Activated T-helper 2 cell treated with anti-CD3 and anti-CD28 coated beads, Interferon-gamma antibody, Interleukin-2, Interleukin-4, amounts not matched to agents 10 μg/mL and 5 μg/mL and 100 μg/mL, durations not matched to agents 14 hours and 24 hours and 36 hours (primary cell): ENCODE measurements at regions of chr10 and their contacts with region 1.

Region 1: DNA sequence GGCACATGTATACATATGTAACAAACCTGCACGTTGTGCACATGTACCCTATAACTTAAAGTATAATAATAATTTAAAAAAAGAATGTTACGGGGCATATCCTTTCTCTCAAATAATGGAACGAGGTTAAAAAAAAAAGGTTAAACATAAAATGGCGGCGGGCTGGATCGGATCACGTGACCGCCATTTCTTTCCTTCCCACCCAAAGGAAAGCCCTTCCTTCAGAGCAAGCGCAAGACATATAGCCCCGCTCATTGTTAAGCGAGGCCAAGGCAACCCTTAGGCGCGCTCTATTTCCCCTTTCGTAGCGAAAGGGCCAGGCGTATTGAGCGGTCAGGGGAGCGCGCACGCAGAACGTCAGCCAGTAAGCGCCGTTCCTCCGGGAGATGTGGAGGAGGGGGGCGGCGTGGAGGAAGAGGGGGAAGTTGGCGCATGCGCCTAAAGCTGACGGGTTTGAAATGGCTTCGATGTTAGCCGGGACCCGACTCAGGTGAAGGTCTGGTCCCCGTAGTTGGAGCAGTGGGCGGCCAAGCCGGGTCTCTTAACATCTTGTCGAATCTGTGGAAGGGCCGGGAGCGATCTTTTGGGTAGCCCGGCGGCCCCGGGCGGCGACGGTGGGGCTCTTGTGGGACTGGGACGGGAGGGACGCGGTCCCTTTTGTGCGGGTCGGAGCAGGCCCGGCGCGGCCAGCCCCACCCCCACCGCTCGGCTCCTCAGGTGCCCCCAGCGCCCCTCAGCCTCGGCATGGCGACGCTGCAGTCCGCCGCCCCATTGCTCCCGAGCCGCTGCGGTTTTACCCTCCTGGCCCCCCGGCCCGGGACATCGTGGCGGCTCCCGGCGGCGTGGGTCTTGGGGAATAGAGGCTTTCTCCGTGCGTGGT is at the start of gene CCAR1:
- DNase-seq: peak; percentile 95
- H3K4me3 Mint-ChIP-seq: peak within 1 kb of the TSS; percentile 80
- H3K27ac Mint-ChIP-seq: peak within 1 kb of the TSS; percentile 89
- H3K4me1 Mint-ChIP-seq: peaks cover 10% of the 10 kb centered on the region
- H3K27me3 Mint-ChIP-seq: no peaks in the 10 kb centered on the region
- total RNA-seq, gene CCAR1: 94.6 and 108 TPM in 2 replicates

Region 2: DNA sequence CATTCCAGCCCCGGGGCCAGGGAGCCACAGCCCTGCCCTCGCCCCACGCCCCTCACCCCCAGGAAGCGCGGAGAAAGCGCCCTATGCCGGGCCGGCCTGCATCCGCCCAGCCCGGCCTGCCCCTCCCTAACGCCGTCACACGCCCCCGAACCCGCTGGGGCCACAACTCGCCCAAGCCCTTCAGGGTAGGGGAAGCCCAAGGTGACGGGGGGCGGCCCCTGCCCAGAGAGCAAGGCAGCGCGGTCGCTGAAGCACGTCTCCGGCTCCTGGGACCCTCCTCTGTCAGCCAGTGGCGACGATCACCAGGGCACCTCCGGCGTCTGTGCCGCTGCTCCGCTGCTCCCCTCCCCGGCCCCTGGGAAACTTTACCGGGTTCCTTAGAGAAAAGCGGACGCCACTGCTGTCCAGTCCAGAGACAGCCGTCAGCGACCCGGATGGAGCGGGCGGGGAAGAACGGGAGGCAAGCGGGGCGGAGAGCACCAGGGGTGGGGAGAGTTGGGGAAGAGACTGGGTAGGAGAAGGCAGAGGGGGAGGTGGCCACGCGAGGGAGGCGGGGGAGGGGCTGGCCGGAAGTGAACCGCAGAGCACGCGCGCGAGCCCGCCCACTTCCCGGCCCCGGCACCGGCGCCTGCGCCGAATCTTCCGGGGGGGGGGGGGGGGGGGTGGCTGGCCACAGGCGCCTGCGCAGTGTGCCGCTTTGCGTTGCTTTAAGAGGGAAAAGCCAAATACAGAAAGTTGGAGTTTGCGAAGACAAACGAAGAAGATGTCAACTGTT is 646.1 kb before region 1 on chr10 and contains the start of gene HERC4:
- intact Hi-C with region 1: loop called (anchors 2 kb)
- DNase-seq: peak; percentile 83
- H3K4me3 Mint-ChIP-seq: peak within 1 kb of the TSS; percentile 96
- H3K27ac Mint-ChIP-seq: peak within 1 kb of the TSS; percentile 92
- H3K4me1 Mint-ChIP-seq: peaks cover 42% of the 10 kb centered on the region
- H3K27me3 Mint-ChIP-seq: no peaks in the 10 kb centered on the region
- total RNA-seq, gene HERC4: 48.9 and 55.7 TPM in 2 replicates

Region 3: GRCh38 chr10:68406815-68407548 is 314.1 kb before region 1 on chr10 and contains the start of gene RUFY2:
- intact Hi-C with region 1: loop called (anchors 5 kb)
- DNase-seq: peak; percentile 75
- H3K4me3 Mint-ChIP-seq: peak within 1 kb of the TSS; percentile 87
- H3K27ac Mint-ChIP-seq: peak within 1 kb of the TSS; percentile 80
- H3K4me1 Mint-ChIP-seq: peaks cover 14% of the 10 kb centered on the region
- H3K27me3 Mint-ChIP-seq: no peaks in the 10 kb centered on the region
- total RNA-seq, gene RUFY2: 11.3 and 12.1 TPM in 2 replicates

Region 4: DNA sequence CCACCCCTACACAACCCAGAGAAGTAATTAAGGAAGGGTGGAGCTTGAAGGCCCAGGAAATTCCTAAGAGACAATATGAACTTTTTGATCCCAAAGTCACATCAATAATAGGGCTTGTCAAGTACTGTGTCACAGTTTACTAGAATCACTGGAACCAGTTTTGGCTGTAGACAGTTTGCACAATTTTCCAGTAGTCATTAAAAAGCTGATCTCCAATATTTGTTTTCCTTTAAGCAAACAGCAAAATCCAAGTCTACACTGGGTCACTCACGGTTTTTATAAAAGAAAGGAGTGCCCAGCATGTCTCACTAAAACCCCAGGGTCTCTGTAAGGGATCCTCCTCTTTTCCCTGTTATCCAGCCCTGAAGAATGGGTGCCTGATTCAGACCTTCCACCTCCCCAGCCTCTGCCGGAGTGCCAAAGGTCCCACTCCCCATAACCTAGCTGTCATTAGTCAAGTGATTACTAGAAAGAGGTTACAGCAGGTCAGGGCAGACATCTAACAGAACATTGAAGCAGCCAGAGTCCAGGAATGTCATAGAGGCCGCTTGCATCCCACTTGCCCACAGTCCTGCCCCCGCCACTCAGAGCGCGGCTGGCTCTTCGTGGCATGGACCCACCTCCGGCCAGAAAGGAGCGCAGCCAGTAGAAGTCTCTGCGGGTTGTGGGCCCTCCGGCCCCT is 194.3 kb before region 1 on chr10:
- intact Hi-C with region 1: loop called (anchors 1 kb)
- DNase-seq: no peak
- H3K4me3 Mint-ChIP-seq: peak overlapping the region; percentile 92
- H3K27ac Mint-ChIP-seq: peak overlapping the region; percentile 88
- H3K4me1 Mint-ChIP-seq: peaks cover 8% of the 10 kb centered on the region
- H3K27me3 Mint-ChIP-seq: no peaks in the 10 kb centered on the region

Region 5: GRCh38 chr10:68600041-68600778 is 120.8 kb before region 1 on chr10:
- intact Hi-C with region 1: loop called (anchors 5 kb)
- DNase-seq: peak; percentile 52
- H3K4me3 Mint-ChIP-seq: peak overlapping the region; percentile 87
- H3K27ac Mint-ChIP-seq: peak overlapping the region; percentile 88
- H3K4me1 Mint-ChIP-seq: peaks cover 26% of the 10 kb centered on the region
- H3K27me3 Mint-ChIP-seq: no peaks in the 10 kb centered on the region

Region 6: DNA sequence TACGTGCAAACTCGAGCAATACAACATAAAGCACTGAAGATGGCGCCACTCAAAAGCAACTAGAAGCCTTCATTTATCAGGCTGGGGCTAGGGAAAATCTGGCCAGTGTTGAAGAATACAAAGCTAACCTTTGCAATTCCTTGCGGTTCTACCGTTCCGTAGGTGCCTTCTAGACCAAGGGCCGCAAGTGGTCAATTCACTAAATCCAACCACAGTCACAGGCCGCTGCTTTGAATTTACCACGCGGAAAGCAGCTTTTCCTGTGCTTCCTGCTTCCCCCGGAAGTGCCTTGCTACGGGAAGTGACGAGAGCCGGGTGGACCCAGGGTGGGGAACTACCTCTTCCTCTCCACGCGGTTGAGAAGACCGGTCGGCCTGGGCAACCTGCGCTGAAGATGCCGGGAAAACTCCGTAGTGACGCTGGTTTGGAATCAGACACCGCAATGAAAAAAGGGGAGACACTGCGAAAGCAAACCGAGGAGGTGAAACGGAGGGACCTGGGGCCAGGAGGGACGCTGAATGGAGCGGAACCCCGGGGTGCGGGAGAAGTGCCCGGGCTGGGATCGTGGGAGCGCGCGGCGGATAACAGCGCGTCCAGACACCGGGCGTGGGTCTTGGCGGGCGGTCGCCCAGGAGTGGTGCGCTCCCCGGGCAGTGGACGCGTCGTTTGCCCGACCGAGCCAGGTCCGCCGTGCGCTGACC is 234.9 kb after region 1 on chr10 and contains the start of gene DDX21:
- intact Hi-C with region 1: loop called (anchors 1 kb)
- DNase-seq: peak; percentile 86
- H3K4me3 Mint-ChIP-seq: peak within 1 kb of the TSS; percentile 97
- H3K27ac Mint-ChIP-seq: peak within 1 kb of the TSS; percentile 100
- H3K4me1 Mint-ChIP-seq: peaks cover 22% of the 10 kb centered on the region
- H3K27me3 Mint-ChIP-seq: no peaks in the 10 kb centered on the region
- total RNA-seq, gene DDX21: 205 and 210 TPM in 2 replicates

Region 7: DNA sequence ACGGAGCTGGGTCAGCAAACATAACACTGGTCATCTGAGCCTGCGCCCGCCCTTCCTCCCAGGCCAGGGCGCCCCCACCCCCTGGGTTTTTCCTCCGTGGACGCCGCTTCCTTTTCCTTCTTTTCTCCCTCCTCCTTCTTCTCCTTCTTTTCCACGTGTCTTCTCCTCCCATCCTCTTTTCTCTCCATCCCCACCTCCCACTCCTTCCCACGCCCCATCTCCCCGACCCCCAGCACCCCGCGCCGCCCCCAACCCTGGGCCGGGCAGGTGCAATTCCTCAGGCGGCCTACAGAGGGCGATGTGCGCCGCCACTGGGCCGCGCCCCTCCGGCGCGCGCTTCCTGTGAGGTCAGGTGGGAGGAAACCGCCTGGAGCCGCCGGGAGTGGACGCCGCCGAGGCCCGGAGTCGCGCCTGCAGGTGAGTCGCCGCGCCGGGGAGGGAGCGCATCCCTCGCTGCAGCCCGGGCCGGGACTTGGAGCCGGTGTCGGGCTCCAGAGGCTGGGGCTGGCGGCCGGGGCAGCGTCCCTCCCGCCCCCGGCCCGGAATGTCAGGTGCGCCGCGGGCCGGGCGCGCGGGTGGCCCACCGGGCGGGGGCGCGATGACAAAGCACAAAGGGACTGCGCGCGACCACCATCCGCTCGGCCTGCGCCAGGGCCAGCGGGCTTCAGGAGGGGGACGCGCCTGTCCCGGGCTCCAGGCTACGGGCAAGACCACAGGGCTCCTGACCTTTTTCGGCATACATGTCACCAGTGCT is 909.0 kb after region 1 on chr10 and contains the start of gene FAM241B:
- intact Hi-C with region 1: no loop called
- DNase-seq: peak; percentile 71
- H3K4me3 Mint-ChIP-seq: peak within 1 kb of the TSS; percentile 69
- H3K27ac Mint-ChIP-seq: no peak within 1 kb of the TSS
- H3K4me1 Mint-ChIP-seq: peaks cover 3% of the 10 kb centered on the region
- H3K27me3 Mint-ChIP-seq: peaks cover 4% of the 10 kb centered on the region
- total RNA-seq, gene FAM241B: 9.3 and 12.1 TPM in 2 replicates

Region 8: DNA sequence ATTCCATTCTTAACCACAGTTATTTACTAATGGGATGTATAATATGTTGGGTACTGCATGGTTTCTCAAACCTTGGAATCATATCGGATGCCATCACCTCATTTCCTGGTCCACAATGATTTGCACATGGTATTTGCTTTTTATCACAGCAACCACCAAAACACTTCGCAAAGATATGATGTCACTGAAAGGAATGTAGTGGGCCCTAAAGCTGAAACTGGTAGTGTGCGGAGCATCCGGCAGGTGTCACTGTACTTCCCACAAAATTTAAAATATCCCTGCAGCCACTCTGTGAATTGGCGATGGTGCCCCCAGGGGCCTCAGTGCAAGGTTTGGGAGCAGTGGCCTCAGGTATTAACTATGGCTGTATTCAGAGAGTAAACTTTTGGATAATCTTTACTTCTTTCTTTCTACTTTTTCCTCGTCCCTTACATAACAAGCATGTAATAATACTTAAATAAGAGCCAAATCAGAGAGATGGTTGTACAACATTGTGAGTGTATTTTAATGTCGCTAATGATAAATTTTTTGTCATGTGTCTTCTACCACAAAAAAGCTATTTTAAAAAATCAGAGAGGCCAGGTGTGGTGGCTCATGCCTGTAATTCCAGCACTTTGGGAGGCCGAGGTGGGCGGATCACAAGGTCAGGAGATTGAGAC is 975.2 kb after region 1 on chr10:
- intact Hi-C with region 1: no loop called
- DNase-seq: no peak
- H3K4me3 Mint-ChIP-seq: no peak overlapping the region
- H3K27ac Mint-ChIP-seq: no peak overlapping the region
- H3K4me1 Mint-ChIP-seq: no peaks in the 10 kb centered on the region
- H3K27me3 Mint-ChIP-seq: peaks cover 8% of the 10 kb centered on the region